Right ventricle myocardium superior (tissue), 1 donor: ENCODE measurements at regions of chr15 and their contacts with region 1.

Region 1: GRCh38 chr15:55221090-55222011 is 24.6 kb upstream of the RSL24D1 start:
- DNase-seq: peak; percentile 22
- ATAC-seq: peak; percentile 82

Region 2: GRCh38 chr15:55168329-55168974 is 52.9 kb before region 1 on chr15:
- intact Hi-C with region 1: no loop called
- DNase-seq: peak; percentile 42
- ATAC-seq: peak; percentile 59

Region 3: GRCh38 chr15:55290528-55291057 is 69.2 kb after region 1 on chr15:
- intact Hi-C with region 1: loop called (anchors 2 kb)
- DNase-seq: peak; percentile 89
- ATAC-seq: peak; percentile 97

Region 4: DNA sequence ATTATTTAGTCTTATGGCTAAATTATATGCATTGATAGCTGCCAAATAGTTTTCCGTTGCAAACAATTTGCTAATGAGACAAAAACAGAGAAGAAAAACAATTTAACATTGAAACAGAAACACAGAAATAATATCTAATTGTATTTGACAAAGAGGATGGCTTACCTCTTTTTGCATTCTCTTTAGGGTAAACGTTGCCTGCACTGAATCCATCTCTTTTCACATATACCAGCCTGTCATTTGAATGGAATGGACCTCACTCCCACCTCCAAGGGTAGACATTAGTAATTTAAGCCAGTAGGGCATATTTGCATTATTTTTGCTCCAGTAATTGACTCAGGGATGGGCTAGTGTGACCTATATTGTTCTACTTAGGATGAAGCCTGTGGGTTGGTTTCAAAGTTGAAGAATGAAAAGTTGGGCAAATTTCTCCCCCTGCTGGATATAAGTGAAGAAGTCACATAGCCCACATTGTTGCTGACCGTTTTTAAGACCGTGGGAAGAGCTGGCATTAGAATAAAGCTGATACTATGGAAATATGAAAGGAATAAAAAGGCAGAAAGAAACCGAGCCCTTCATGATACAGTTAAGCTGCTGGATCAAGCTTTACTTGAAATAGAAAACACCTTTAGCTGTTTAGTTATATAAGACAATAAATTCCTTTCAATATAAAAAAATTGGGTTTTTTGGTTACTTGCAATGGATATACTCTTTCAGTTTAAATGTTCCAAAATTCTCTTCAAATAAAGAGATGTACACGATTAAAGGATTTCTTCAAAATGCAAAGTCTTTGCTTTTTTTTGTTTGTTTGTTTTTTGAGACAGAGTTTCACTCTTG is 213.9 kb after region 1 on chr15:
- intact Hi-C with region 1: loop called (anchors 10 kb)
- DNase-seq: no peak
- ATAC-seq: peak; percentile 65